ENCODE measurements at regions of chrX and their contacts with region 1.

Region 1: GRCh38 chrX:118666548-118666947 is 60.9 kb upstream of the IL13RA1 start:
- DNase-seq: no peak
- ATAC-seq: no peak
- H3K4me3 ChIP-seq: no peak overlapping the region
- H3K4me3 Mint-ChIP-seq: no peak overlapping the region
- H3K27ac ChIP-seq: no peak overlapping the region
- H3K27ac Mint-ChIP-seq: peak overlapping the region in 1 of 9 donors; percentile 62
- H3K4me1 ChIP-seq: no peaks in the 10 kb centered on the region
- H3K4me1 Mint-ChIP-seq: peaks cover 0 to 5% (median 3%) of the 10 kb centered on the region in 7 donors
- H3K27me3 ChIP-seq: no peaks in the 10 kb centered on the region
- H3K27me3 Mint-ChIP-seq: no peaks in the 10 kb centered on the region

Region 2: DNA sequence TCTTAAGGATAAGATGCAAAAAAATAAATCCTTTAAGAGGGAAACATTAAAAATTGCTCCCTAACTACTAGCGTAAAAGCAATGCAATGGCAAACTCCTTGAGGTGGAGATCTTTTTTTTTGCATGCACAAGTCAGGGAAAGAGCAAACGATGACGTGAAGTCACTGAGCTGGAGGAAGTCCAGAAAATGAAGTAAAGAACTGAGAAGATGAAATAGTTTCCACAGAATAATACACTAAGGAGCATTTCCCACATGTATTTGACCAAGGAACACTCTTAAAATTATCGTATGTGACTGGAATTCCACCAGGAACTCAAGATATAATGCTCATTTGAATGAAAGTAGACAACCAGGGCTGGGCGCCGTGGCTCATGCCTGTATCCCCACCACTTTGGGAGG is 192.0 kb before region 1 on chrX:
- CTCF ChIA-PET with region 1: no interaction called
- POLR2A ChIA-PET with region 1: no interaction called
- intact Hi-C with region 1: no loop called
- DNase-seq: no peak
- ATAC-seq: no peak
- H3K4me3 ChIP-seq: no peak overlapping the region
- H3K4me3 Mint-ChIP-seq: no peak overlapping the region
- H3K27ac ChIP-seq: no peak overlapping the region
- H3K27ac Mint-ChIP-seq: no peak overlapping the region
- H3K4me1 ChIP-seq: no peaks in the 10 kb centered on the region
- H3K4me1 Mint-ChIP-seq: no peaks in the 10 kb centered on the region
- H3K27me3 ChIP-seq: no peaks in the 10 kb centered on the region
- H3K27me3 Mint-ChIP-seq: no peaks in the 10 kb centered on the region

Region 3: DNA sequence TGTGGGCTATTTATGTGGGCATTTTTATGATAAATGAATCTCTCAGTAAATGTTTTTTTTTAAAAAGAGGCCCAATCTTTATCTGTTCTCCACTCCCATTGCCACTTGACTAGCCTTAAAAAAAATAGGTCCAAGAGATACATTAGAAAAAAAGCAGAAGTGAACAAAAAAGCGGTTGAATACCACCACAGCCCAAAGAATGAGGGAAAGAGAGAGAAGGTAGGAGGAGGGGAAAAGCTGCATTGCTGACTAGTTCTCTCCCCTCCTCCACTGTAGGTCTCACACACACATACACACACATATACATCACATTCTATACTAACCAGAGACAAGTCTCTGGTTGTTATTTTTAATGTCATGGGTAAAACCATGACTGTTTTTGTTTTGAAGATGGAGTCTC is 35.0 kb before region 1 on chrX:
- CTCF ChIA-PET with region 1: no interaction called
- POLR2A ChIA-PET with region 1: no interaction called
- intact Hi-C with region 1: loop called in 1 of 2 experiments (anchors 5 kb)
- DNase-seq: no peak
- ATAC-seq: no peak
- H3K4me3 ChIP-seq: no peak overlapping the region
- H3K4me3 Mint-ChIP-seq: no peak overlapping the region
- H3K27ac ChIP-seq: no peak overlapping the region
- H3K27ac Mint-ChIP-seq: peak overlapping the region in 2 of 9 donors; percentile 40 to 61
- H3K4me1 ChIP-seq: no peaks in the 10 kb centered on the region
- H3K4me1 Mint-ChIP-seq: peaks cover 0 to 9% (median 0%) of the 10 kb centered on the region in 7 donors
- H3K27me3 ChIP-seq: no peaks in the 10 kb centered on the region
- H3K27me3 Mint-ChIP-seq: no peaks in the 10 kb centered on the region

Region 4: GRCh38 chrX:118943102-118943501 is 276.6 kb after region 1 on chrX:
- CTCF ChIA-PET with region 1: no interaction called
- POLR2A ChIA-PET with region 1: no interaction called
- intact Hi-C with region 1: no loop called
- DNase-seq: no peak
- ATAC-seq: no peak
- H3K4me3 ChIP-seq: no peak overlapping the region
- H3K4me3 Mint-ChIP-seq: no peak overlapping the region
- H3K27ac ChIP-seq: no peak overlapping the region
- H3K27ac Mint-ChIP-seq: no peak overlapping the region
- H3K4me1 ChIP-seq: no peaks in the 10 kb centered on the region
- H3K4me1 Mint-ChIP-seq: no peaks in the 10 kb centered on the region
- H3K27me3 ChIP-seq: no peaks in the 10 kb centered on the region
- H3K27me3 Mint-ChIP-seq: peaks cover 0 to 7% (median 0%) of the 10 kb centered on the region in 5 donors

Measured in naive thymus-derived CD4-positive, alpha-beta T cell (primary cell).